ENCODE measurements at regions of chr1 and their contacts with region 1.

Region 1: GRCh38 chr1:40185951-40186864 is 25.0 kb downstream of the RLF start:
- DNase-seq: peak; percentile 75
- H3K4me3 Mint-ChIP-seq: peak overlapping the region; percentile 46
- H3K27ac Mint-ChIP-seq: peak overlapping the region; percentile 56
- H3K4me1 Mint-ChIP-seq: peaks cover 45% of the 10 kb centered on the region
- H3K27me3 Mint-ChIP-seq: no peaks in the 10 kb centered on the region

Region 2: DNA sequence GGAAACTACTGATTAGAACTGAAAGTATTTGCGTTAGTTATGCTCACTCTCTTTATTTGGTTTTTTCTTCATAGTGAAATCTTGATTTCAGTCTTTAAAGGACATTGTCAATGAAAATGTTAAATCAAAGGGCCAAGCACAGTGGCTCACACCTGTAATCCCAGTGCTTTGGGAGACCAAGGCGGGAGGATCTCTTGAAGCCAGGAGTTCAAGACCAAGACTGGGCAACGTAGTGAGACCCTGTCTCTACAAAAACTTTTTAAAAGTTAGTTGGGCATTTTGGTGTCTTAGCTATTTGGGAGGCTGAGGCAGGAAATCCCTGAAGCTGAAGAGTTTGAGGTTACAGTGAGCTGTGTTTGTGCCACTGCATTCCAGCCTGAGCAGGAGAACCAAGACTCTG is 11.4 kb before region 1 on chr1:
- CTCF ChIA-PET with region 1: interaction called, 12 read pairs
- POLR2A ChIA-PET with region 1: interaction called, 3 read pairs
- intact Hi-C with region 1: no loop called
- DNase-seq: no peak
- H3K4me3 Mint-ChIP-seq: no peak overlapping the region
- H3K27ac Mint-ChIP-seq: no peak overlapping the region
- H3K4me1 Mint-ChIP-seq: peaks cover 50% of the 10 kb centered on the region
- H3K27me3 Mint-ChIP-seq: no peaks in the 10 kb centered on the region

Region 3: GRCh38 chr1:40224040-40224439 is 37.8 kb after region 1 on chr1:
- CTCF ChIA-PET with region 1: interaction called, 3 read pairs
- POLR2A ChIA-PET with region 1: interaction called, 4 read pairs
- intact Hi-C with region 1: loop called (anchors 5 kb)
- DNase-seq: peak; percentile 41
- H3K4me3 Mint-ChIP-seq: no peak overlapping the region
- H3K27ac Mint-ChIP-seq: no peak overlapping the region
- H3K4me1 Mint-ChIP-seq: peaks cover 25% of the 10 kb centered on the region
- H3K27me3 Mint-ChIP-seq: no peaks in the 10 kb centered on the region

Region 4: GRCh38 chr1:40264354-40264781 is 78.2 kb after region 1 on chr1:
- CTCF ChIA-PET with region 1: interaction called, 3 read pairs
- POLR2A ChIA-PET with region 1: no interaction called
- intact Hi-C with region 1: loop called (anchors 1 kb)
- DNase-seq: peak; percentile 59
- H3K4me3 Mint-ChIP-seq: peak overlapping the region; percentile 16
- H3K27ac Mint-ChIP-seq: peak overlapping the region; percentile 91
- H3K4me1 Mint-ChIP-seq: peaks cover 63% of the 10 kb centered on the region
- H3K27me3 Mint-ChIP-seq: no peaks in the 10 kb centered on the region